GM10248 (cell line): ENCODE measurements at regions of chr4 and their contacts with region 1.

Region 1: GRCh38 chr4:122716825-122717448 is 15.6 kb upstream of the BBS12 start:
- DNase-seq: peak; percentile 67
- CTCF ChIP-seq: peak; percentile 86

Region 2: DNA sequence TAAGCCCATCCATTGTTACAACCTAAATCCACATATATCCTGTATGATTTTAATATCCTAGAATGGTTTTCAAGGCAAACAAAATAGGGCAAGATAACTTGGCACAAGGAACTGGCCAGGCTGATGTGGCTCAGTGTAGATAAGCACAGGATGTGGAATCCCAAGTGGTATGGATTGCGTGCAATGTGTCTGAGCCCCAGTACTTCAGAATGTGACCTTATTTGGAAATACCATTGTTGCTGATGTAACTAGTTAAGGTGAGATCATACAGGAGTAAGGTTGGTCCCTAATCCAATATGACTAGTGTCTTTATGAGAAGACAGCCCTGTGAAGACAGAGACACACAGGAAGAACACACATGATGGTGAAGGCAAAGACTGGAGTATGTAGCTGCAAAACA is 168.5 kb before region 1 on chr4:
- CTCF ChIA-PET with region 1: no interaction called
- POLR2A ChIA-PET with region 1: no interaction called
- DNase-seq: no peak
- CTCF ChIP-seq: no peak

Region 3: GRCh38 chr4:122602277-122603142 is 114.4 kb before region 1 on chr4:
- CTCF ChIA-PET with region 1: interaction called, 19 read pairs
- POLR2A ChIA-PET with region 1: no interaction called
- DNase-seq: peak; percentile 20
- CTCF ChIP-seq: peak; percentile 48

Region 4: GRCh38 chr4:122703868-122704267 is 13.1 kb before region 1 on chr4:
- CTCF ChIA-PET with region 1: interaction called, 14 read pairs
- POLR2A ChIA-PET with region 1: no interaction called
- DNase-seq: no peak
- CTCF ChIP-seq: no peak

Region 5: GRCh38 chr4:122732329-122733026 is 15.5 kb after region 1 on chr4 and contains the start of gene BBS12:
- CTCF ChIA-PET with region 1: interaction called, 36 read pairs
- POLR2A ChIA-PET with region 1: no interaction called
- DNase-seq: peak; percentile 98
- CTCF ChIP-seq: peak; percentile 51

Region 6: GRCh38 chr4:122930862-122931261 is 213.9 kb after region 1 on chr4:
- CTCF ChIA-PET with region 1: interaction called, 11 read pairs
- POLR2A ChIA-PET with region 1: no interaction called
- DNase-seq: no peak
- CTCF ChIP-seq: peak; percentile 38

Region 7: GRCh38 chr4:122946142-122946541 is 229.2 kb after region 1 on chr4:
- CTCF ChIA-PET with region 1: no interaction called
- POLR2A ChIA-PET with region 1: no interaction called
- DNase-seq: no peak
- CTCF ChIP-seq: no peak